MCF 10A (cell line): ENCODE measurements at regions of chr4 and their contacts with region 1.

Region 1: DNA sequence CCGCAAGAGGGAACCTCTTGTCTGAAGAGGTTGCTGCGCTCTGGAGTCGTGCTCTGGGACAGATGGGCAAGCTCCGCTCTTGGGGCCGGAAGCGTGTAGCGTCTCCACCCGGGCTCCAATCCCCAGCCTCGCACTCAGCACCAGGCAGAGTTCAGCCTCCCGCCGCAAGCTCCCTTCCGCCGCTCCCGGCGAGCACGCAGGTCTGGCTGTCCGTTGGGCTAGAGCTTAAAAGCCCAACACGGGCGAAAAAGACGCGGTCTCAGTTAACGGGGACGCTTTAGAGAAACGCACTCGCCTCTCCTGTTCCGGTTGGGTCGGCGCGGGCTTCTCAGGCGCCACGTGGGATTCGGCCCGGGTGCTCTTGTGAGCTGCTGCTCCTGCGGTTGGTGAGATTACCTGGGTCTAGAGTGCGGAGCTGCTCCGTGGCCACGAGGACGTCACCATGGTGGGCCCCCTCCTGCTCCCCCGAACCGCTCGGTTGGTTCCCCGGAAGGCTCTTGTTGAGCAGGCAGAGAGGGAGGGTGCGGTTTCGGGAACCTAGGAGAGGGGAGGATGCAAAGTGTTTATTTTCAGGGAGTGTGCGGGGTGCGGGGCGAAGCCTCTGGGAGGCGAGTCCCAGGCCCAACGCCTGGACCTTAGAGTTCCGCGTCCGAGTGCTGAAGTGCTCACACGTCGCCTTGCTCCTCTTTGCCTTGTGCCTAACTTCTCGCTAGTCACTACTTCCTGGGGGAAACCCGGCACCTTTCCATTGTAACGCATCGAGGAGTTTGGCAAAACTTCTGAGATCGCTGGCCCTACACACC is at the start of gene TMA16:
- DNase-seq: peak; percentile 96
- H3K4me3 Mint-ChIP-seq: peak within 1 kb of the TSS; percentile 94
- H3K27ac Mint-ChIP-seq: peak within 1 kb of the TSS; percentile 98
- H3K4me1 Mint-ChIP-seq: peaks cover 14% of the 10 kb centered on the region
- H3K27me3 Mint-ChIP-seq: no peaks in the 10 kb centered on the region
- CTCF ChIP-seq: no peak
- total RNA-seq, gene TMA16: 41.4 and 53.9 TPM in 2 replicates

Region 2: DNA sequence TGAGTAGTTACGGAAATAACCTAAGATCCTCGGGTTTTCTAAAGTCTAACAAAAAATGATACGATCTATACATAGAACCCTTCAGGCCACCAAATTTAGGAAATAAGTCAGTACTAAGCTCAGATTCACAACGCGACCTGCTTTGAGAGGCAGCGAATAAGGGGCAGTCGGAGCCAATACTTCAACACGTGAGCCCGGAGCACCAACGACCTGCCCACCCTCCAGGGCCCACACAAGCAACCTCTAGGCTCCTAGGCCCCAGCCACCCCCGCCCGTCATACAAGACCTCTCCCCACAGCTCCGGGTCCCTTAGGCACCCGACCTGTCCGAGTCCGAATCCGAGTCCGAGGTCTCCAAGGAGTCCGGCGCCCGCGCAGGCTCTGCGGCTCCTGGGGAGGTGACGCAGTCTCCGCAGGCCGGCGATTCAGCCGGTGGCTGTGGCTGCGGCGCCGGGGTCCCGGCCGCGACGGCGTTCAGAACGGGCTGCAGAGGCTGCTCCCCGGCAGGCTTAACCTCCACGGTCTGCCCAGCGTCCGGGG is 328.5 kb before region 1 on chr4:
- CTCF ChIA-PET with region 1: no interaction called
- POLR2A ChIA-PET with region 1: interaction called, 21 read pairs
- intact Hi-C with region 1: loop called (anchors 10 kb)
- DNase-seq: peak; percentile 63
- H3K4me3 Mint-ChIP-seq: peak overlapping the region; percentile 77
- H3K27ac Mint-ChIP-seq: peak overlapping the region; percentile 99
- H3K4me1 Mint-ChIP-seq: peaks cover 26% of the 10 kb centered on the region
- H3K27me3 Mint-ChIP-seq: no peaks in the 10 kb centered on the region
- CTCF ChIP-seq: no peak

Region 3: GRCh38 chr4:163707873-163708272 is 213.3 kb after region 1 on chr4:
- CTCF ChIA-PET with region 1: no interaction called
- POLR2A ChIA-PET with region 1: no interaction called
- intact Hi-C with region 1: no loop called
- DNase-seq: no peak
- H3K4me3 Mint-ChIP-seq: no peak overlapping the region
- H3K27ac Mint-ChIP-seq: no peak overlapping the region
- H3K4me1 Mint-ChIP-seq: no peaks in the 10 kb centered on the region
- H3K27me3 Mint-ChIP-seq: no peaks in the 10 kb centered on the region
- CTCF ChIP-seq: no peak